Breast epithelium (tissue), 4 donors: ENCODE measurements at regions of chrX and their contacts with region 1.

Region 1: DNA sequence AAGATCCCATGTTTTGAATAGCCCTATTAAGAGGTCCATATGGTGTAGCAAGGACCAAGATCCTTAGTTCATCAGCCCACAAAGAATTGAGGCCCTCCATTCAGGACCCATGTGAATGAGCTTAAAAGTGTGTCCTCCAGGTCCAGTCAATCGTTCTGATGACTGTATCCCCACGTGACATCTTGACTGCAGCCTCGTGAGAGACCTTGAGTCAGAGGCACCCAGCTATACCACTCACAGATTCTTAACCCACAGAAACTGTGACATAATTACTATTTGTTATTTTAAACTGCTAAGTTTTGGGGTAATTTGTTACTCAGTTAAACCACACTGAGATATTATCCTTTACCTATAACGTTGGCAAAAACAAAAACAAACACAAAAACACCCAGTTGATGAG is 62.4 kb downstream of the ZNF182 start:
- DNase-seq: no peak
- H3K4me3 ChIP-seq: no peak overlapping the region
- H3K27ac ChIP-seq: no peak overlapping the region
- H3K4me1 ChIP-seq: no peaks in the 10 kb centered on the region
- H3K27me3 ChIP-seq: no peaks in the 10 kb centered on the region
- CTCF ChIP-seq: no peak
- POLR2A ChIP-seq: no peak

Region 2: DNA sequence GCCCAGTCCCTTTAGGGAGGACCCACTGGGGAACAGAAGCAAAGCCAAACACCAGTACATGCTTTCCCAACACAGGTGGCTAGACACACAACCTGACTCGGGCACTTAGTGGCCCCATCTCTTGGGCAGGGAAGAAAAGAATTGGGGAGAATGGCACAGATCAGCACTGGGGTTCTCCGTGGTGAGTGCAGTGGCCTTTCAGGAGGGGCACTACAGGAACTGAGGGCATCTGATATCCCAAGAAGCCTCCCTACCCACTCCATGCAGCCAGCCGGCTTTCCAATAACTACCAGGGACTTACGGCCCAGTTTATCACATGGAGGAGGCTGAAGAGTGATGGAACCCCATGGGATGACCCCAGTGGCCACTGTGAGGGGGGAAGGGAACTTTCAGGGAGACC is 840.2 kb before region 1 on chrX:
- intact Hi-C with region 1: loop called (anchors 5 kb)
- DNase-seq: no peak
- H3K4me3 ChIP-seq: no peak overlapping the region
- H3K27ac ChIP-seq: no peak overlapping the region
- H3K4me1 ChIP-seq: no peaks in the 10 kb centered on the region
- H3K27me3 ChIP-seq: peaks cover 0 to 59% of the 10 kb centered on the region in 2 donors
- CTCF ChIP-seq: no peak
- POLR2A ChIP-seq: no peak

Region 3: GRCh38 chrX:47540754-47541538 is 400.5 kb before region 1 on chrX:
- intact Hi-C with region 1: no loop called
- DNase-seq: peak; percentile 67 to 79
- H3K4me3 ChIP-seq: no peak overlapping the region
- H3K27ac ChIP-seq: peak overlapping the region; percentile 42 to 70
- H3K4me1 ChIP-seq: no peaks in the 10 kb centered on the region
- H3K27me3 ChIP-seq: peaks cover 0 to 4% of the 10 kb centered on the region in 2 donors
- CTCF ChIP-seq: peak; percentile 44 to 67 (median 63)
- POLR2A ChIP-seq: no peak